ENCODE measurements at regions of chr12 and their contacts with region 1.

Region 1: GRCh38 chr12:107760809-107761501 is at the start of gene PRDM4:
- DNase-seq: peak; percentile 95
- total RNA-seq, gene PRDM4: 13.2 TPM

Region 2: GRCh38 chr12:107685360-107686248 is 75.4 kb before region 1 on chr12 and contains the start of gene PWP1:
- intact Hi-C with region 1: loop called (anchors 5 kb)
- DNase-seq: peak; percentile 97
- total RNA-seq, gene PWP1: 13.5 TPM

Region 3: GRCh38 chr12:107884769-107885694 is 124.1 kb after region 1 on chr12:
- intact Hi-C with region 1: loop called (anchors 2 kb)
- DNase-seq: no peak